Activated CD4-positive, alpha-beta memory T cell treated with anti-CD3 and anti-CD28 coated beads for 36 hours (primary cell): ENCODE measurements at regions of chr5 and their contacts with region 1.

Region 1: GRCh38 chr5:14664302-14665100 is at the start of gene OTULIN:
- DNase-seq: peak; percentile 94
- H3K4me3 Mint-ChIP-seq: peak within 1 kb of the TSS; percentile 92
- H3K27ac Mint-ChIP-seq: peak within 1 kb of the TSS; percentile 95
- H3K4me1 Mint-ChIP-seq: peaks cover 54% of the 10 kb centered on the region
- H3K27me3 Mint-ChIP-seq: no peaks in the 10 kb centered on the region
- total RNA-seq, gene OTULIN: 53.3 to 53.6 TPM

Region 2: DNA sequence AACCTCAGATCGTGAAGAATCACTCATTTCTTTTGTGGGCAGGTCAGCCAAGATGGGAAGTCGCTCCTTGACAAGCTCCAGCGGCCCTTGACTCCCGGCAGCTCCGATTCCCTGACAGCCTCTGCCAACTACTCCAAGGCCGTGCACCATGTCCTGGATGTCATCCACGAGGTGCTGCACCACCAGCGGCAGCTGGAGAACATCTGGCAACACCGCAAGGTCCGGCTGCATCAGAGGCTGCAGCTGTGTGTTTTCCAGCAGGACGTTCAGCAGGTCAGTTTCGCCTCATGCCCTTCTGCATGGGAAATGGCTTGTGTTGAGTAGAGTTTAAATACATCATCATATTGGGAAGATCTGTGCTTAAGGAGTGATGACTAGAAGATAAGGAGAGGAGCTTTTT is 348.0 kb before region 1 on chr5:
- CTCF ChIA-PET with region 1: no interaction called
- POLR2A ChIA-PET with region 1: no interaction called
- intact Hi-C with region 1: no loop called
- DNase-seq: no peak
- H3K4me3 Mint-ChIP-seq: no peak overlapping the region
- H3K27ac Mint-ChIP-seq: no peak overlapping the region
- H3K4me1 Mint-ChIP-seq: no peaks in the 10 kb centered on the region
- H3K27me3 Mint-ChIP-seq: peaks cover 2% of the 10 kb centered on the region

Region 3: DNA sequence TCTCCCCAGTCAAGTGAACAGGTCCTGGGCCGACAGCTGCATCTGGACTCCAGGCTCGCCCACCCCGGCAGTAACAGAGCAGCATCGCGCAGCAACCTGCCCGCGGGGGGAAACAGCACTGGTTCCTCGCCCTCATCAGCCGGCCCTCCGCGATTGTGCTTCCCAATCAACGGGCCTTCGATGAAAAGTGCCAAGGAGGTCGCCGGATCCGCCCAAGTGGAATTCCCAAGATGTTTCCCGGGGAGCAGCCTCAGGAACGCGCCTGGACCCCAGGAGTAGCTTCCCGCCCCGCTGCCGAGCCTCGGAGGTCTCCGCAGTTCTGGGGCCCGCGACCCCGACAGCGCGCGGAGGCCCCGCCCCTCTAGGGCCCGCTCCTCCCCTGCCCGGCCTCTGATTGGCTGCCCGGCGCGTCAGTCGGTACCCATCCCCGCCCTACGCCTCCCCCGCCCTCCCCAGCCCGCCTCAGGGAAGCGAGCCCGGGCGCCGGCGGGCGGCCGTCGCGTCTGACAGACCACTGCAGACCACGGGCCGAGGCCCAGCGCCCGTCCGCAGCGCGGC is 83.1 kb before region 1 on chr5 and contains the start of gene OTULINL:
- CTCF ChIA-PET with region 1: no interaction called
- POLR2A ChIA-PET with region 1: interaction called, 3 read pairs
- intact Hi-C with region 1: loop called (anchors 2 kb)
- DNase-seq: peak; percentile 91
- H3K4me3 Mint-ChIP-seq: peak within 1 kb of the TSS; percentile 77
- H3K27ac Mint-ChIP-seq: no peak within 1 kb of the TSS
- H3K4me1 Mint-ChIP-seq: peaks cover 27% of the 10 kb centered on the region
- H3K27me3 Mint-ChIP-seq: peaks cover 9% of the 10 kb centered on the region
- total RNA-seq, gene OTULINL: 12.2 to 12.3 TPM

Region 4: GRCh38 chr5:14615344-14615743 is 49.2 kb before region 1 on chr5:
- CTCF ChIA-PET with region 1: no interaction called
- POLR2A ChIA-PET with region 1: no interaction called
- intact Hi-C with region 1: no loop called
- DNase-seq: no peak
- H3K4me3 Mint-ChIP-seq: no peak overlapping the region
- H3K27ac Mint-ChIP-seq: no peak overlapping the region
- H3K4me1 Mint-ChIP-seq: no peaks in the 10 kb centered on the region
- H3K27me3 Mint-ChIP-seq: no peaks in the 10 kb centered on the region

Region 5: DNA sequence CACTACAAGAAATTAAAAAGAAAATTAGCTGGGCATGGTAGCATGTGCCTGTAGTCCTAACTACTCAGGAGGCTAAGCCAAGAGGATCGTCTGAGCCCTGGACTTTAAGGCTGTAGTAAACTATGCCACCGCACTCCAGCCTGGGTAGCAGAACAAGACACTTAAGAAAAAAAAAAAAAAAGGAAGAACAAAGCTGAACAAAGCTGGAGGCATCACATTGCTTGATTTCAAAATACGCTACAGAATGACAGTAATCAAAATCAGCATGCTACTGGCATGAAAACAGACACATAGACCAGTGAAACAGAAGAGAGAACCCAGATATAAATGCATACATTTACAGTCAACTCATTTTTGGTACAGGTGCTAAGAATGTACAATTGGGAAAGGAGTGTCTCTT is 14.4 kb before region 1 on chr5:
- CTCF ChIA-PET with region 1: interaction called, 11 read pairs
- POLR2A ChIA-PET with region 1: no interaction called
- intact Hi-C with region 1: no loop called
- DNase-seq: no peak
- H3K4me3 Mint-ChIP-seq: no peak overlapping the region
- H3K27ac Mint-ChIP-seq: no peak overlapping the region
- H3K4me1 Mint-ChIP-seq: no peaks in the 10 kb centered on the region
- H3K27me3 Mint-ChIP-seq: peaks cover 9% of the 10 kb centered on the region

Region 6: DNA sequence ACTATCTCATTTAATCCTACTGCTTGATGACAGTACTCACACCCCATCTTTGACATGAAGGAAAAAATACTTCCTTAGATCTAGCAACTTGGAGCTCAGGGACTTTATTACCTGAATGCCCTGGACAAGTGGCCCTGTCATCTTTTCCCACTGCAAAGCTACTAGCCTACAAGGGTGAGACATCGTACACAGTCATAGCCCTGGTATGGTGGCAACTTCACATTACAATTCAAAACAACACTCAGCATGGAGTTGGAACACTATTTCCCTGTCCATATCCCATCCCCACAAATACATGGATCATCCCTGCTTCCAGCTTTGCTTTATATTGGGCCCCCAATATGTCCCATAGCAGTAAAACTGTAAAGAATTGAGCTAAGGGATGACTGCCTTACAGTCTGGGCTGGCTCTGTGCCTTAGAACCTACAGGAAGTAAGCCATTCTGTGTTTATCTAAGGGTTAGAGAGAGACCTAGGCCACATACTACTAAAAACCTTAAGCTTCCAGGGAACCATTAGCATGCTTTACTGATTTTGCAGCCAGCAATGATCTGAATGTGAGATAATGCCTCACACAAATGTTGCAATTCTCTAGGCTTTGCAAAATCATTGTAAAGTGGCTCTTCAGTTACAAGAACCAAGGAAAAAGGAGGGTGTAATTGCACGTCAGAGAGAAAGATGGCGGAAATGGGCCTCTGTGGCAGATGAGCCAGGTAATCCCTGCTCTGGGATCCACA is 55.9 kb after region 1 on chr5:
- CTCF ChIA-PET with region 1: no interaction called
- POLR2A ChIA-PET with region 1: no interaction called
- intact Hi-C with region 1: loop called (anchors 2 kb)
- DNase-seq: no peak
- H3K4me3 Mint-ChIP-seq: no peak overlapping the region
- H3K27ac Mint-ChIP-seq: peak overlapping the region; percentile 19
- H3K4me1 Mint-ChIP-seq: peaks cover 46% of the 10 kb centered on the region
- H3K27me3 Mint-ChIP-seq: no peaks in the 10 kb centered on the region

Region 7: DNA sequence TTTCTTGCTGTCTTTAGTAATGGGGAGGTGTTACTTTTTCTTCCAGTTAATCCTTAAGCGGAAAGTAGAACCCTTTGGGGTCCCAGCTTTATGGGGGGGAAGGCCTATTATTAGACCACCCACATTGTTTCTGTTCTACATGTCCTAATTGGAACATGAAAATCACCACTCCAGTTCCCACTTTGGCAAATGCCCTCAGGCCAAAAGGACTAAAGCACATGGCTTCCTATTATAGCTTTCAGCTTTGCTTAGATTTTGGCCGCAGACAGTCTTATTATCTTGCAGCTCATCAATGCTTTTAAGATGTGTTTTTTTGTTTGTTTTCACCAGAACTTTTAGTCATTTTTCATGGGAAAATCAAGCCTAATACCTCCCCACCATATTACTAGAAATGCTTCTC is 503.9 kb after region 1 on chr5:
- CTCF ChIA-PET with region 1: no interaction called
- POLR2A ChIA-PET with region 1: no interaction called
- intact Hi-C with region 1: no loop called
- DNase-seq: no peak
- H3K4me3 Mint-ChIP-seq: no peak overlapping the region
- H3K27ac Mint-ChIP-seq: no peak overlapping the region
- H3K4me1 Mint-ChIP-seq: no peaks in the 10 kb centered on the region
- H3K27me3 Mint-ChIP-seq: no peaks in the 10 kb centered on the region

Region 8: GRCh38 chr5:15366676-15367391 is 702.3 kb after region 1 on chr5:
- CTCF ChIA-PET with region 1: no interaction called
- POLR2A ChIA-PET with region 1: no interaction called
- intact Hi-C with region 1: no loop called
- DNase-seq: no peak
- H3K4me3 Mint-ChIP-seq: no peak overlapping the region
- H3K27ac Mint-ChIP-seq: no peak overlapping the region
- H3K4me1 Mint-ChIP-seq: no peaks in the 10 kb centered on the region
- H3K27me3 Mint-ChIP-seq: no peaks in the 10 kb centered on the region

Region 9: DNA sequence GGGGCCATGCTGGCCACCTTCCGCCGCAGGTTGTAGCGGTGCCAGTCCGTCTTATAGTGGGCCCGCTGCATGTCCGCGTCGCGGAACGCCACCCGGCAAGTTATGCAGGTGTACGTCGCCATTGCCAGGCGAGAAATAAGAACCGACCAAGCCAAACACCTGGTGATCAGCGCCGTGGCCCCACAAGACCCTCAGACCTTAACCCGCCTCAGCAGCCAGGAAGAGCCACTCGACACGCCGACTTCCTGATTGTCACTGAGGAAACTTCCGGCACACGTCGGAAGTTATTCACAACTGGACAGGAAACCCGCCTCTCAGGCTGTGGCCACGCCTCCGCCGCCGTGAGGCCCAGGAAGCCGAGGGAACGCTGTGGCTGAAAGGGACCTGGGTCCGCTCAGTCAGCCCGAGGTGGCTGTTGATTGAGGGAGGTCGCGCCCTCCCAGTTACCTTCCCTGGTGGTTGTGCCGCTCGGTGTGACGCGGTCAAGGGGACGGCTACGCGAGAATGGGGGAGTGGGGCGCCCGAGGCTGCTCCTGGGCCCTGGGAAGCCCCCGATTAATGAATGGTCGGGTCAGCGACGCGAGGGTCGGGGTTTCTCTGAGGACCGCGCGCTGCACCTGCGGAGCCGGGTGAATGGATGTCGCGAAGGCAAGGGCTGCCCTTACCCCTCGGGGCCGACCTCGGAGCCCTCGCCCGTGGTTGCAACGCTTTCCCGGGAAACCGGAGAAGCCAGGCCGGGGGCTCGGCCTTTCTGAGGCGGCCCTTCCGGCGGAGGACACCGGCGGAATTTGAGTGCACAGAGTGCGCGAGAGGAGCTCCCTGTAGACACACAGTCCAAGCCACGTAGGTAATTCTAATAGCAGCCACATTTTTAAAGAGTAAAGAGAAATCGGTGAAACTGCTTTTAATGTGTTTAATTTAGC is 1801.3 kb after region 1 on chr5 and contains the start of gene ZNF622:
- CTCF ChIA-PET with region 1: no interaction called
- POLR2A ChIA-PET with region 1: no interaction called
- intact Hi-C with region 1: loop called (anchors 5 kb)
- DNase-seq: peak; percentile 92
- H3K4me3 Mint-ChIP-seq: peak within 1 kb of the TSS; percentile 98
- H3K27ac Mint-ChIP-seq: peak within 1 kb of the TSS; percentile 96
- H3K4me1 Mint-ChIP-seq: peaks cover 74% of the 10 kb centered on the region
- H3K27me3 Mint-ChIP-seq: no peaks in the 10 kb centered on the region
- total RNA-seq, gene ZNF622: 35.6 to 35.9 TPM